ENCODE measurements at regions of chr16 and their contacts with region 1.

Region 1: DNA sequence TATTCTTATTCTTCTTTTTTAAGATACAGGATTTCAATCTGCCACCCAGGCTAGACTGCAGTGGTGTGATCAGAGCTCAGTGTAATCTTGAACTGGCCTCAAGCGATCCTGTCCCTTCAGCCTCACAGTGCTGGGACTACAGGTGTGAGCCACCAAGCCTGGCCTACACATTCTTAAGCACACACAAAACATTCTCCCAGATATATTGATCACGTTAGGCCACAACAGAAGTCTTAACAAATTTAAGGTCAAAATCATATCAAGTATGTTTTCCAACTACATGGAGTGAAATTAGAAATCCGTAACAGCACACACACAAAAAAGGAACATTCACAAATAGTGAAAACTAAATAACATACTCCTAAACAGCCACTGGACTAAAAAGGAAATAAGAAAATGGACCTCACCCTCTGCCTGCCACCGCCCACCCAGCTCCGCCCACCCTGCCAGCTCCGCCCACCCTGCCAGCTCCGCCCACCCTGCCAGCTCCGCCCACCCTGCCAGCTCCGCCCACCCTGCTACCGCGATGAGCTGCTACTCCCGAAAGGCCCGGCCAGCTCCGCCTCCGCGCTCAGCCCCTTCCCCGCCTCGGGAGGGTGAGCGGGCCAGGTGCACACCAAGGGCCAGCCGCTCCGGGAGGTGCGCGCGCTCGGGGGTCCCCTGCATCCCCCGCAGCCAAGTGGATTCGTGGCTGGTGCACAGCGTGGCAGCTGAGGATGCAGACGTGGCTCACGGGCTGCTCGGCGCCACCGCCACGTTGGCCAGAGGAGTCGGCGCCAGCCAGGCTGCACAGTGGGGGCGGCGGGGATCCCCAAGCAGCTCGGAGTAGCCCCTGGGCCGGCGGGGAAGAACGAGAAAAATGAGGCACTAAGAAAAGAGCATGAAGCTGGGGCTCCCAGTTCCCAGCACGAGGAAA is 41.2 kb downstream of the C16orf87 start:
- DNase-seq: peak; percentile 87 to 92
- ATAC-seq: peak; percentile 94
- H3K4me3 ChIP-seq: peak overlapping the region; percentile 22 to 38
- H3K27ac ChIP-seq: no peak overlapping the region
- H3K4me1 ChIP-seq: no peaks in the 10 kb centered on the region
- H3K27me3 ChIP-seq: no peaks in the 10 kb centered on the region

Region 2: GRCh38 chr16:46673320-46674013 is 116.3 kb before region 1 on chr16:
- intact Hi-C with region 1: loop called in 1 of 2 experiments (anchors 10 kb)
- DNase-seq: peak in 1 of 2 donors; percentile 58
- ATAC-seq: no peak
- H3K4me3 ChIP-seq: no peak overlapping the region
- H3K27ac ChIP-seq: no peak overlapping the region
- H3K4me1 ChIP-seq: no peaks in the 10 kb centered on the region
- H3K27me3 ChIP-seq: no peaks in the 10 kb centered on the region

Region 3: DNA sequence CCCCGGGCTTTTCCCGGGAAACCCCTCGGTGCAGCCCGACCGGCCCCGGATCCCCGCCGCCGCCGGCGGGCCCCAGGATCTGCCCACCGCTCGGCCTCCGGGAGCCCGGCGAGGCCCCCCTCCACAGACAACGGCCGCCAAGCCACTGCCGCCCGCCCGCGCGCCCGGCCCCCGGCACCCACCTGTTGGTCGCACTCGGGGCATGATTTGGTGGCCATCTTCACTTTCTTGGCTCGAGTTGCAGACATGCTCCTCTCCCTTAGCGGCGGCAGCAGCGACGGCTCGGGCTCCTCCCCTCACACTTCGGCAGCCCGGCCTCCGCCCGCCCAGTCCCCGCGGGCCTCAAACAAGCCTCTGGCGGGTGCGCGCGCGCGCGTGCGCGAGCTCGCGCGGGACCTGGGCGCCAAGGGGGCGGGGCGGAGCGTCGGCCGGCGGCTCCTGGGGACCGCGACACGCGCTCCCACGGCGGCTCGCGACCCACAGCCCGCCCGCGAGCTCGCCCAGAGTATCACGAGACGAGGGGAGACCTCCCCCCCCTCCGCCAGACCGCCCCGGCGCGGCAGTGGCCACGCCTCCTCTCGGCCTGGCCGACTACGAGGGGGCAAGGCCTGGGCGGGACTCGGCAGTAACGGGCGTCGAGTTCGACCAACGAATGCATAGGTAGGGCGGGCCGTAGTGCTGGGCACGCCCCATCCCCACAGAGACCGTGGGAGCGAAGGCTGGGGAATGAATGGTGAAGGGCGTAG is 41.3 kb after region 1 on chr16 and contains the start of gene C16orf87:
- intact Hi-C with region 1: loop called in 1 of 2 experiments (anchors 5 kb)
- DNase-seq: peak; percentile 95 to 96
- ATAC-seq: peak; percentile 98
- H3K4me3 ChIP-seq: peak within 1 kb of the TSS; percentile 55 to 90
- H3K27ac ChIP-seq: peak within 1 kb of the TSS; percentile 61 to 65
- H3K4me1 ChIP-seq: peaks cover 0 to 2% of the 10 kb centered on the region in 2 donors
- H3K27me3 ChIP-seq: no peaks in the 10 kb centered on the region
- total RNA-seq, gene C16orf87: 5.6 to 8.8 TPM